MCF 10A (cell line): ENCODE measurements at regions of chr17 and their contacts with region 1.

Region 1: GRCh38 chr17:36534840-36535668 is at the starts of genes MYO19 and PIGW:
- DNase-seq: peak; percentile 93
- H3K4me3 Mint-ChIP-seq: peak within 1 kb of the TSS; percentile 96
- H3K27ac Mint-ChIP-seq: peak within 1 kb of the TSS; percentile 99
- H3K4me1 Mint-ChIP-seq: peaks cover 7% of the 10 kb centered on the region
- H3K27me3 Mint-ChIP-seq: no peaks in the 10 kb centered on the region
- CTCF ChIP-seq: no peak
- total RNA-seq, gene MYO19: 64.7 and 72.2 TPM in 2 replicates
- total RNA-seq, gene PIGW: 7.5 and 9.8 TPM in 2 replicates

Region 2: GRCh38 chr17:36486204-36487194 is 48.6 kb before region 1 on chr17 and contains the start of gene ZNHIT3:
- CTCF ChIA-PET with region 1: interaction called, 3 read pairs
- POLR2A ChIA-PET with region 1: interaction called, 11 read pairs
- intact Hi-C with region 1: no loop called
- DNase-seq: peak; percentile 94
- H3K4me3 Mint-ChIP-seq: peak within 1 kb of the TSS; percentile 86
- H3K27ac Mint-ChIP-seq: peak within 1 kb of the TSS; percentile 92
- H3K4me1 Mint-ChIP-seq: peaks cover 6% of the 10 kb centered on the region
- H3K27me3 Mint-ChIP-seq: peaks cover 10% of the 10 kb centered on the region
- CTCF ChIP-seq: no peak
- total RNA-seq, gene ZNHIT3: 33.9 and 35.5 TPM in 2 replicates

Region 3: DNA sequence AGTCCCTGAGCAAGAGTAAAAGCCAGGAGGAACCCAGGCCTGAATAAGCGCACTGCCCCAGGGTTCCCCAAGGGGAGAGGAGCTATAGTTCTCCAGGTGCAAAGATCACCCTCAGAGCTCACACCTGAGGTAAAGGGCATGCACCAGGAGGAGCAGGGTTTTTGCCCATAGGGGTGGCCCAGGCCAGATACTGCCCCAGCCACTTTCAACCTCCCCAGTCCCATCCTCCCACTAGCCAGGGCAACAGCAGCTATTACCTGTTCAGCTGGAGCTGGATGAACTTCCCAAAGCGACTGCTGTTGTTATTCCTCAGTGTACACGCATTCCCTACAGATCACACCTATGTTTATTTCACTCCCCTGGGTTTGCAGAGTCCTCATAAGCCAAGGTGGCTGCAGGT is 20.2 kb before region 1 on chr17:
- CTCF ChIA-PET with region 1: interaction called, 3 read pairs
- POLR2A ChIA-PET with region 1: interaction called, 11 read pairs
- intact Hi-C with region 1: no loop called
- DNase-seq: no peak
- H3K4me3 Mint-ChIP-seq: no peak overlapping the region
- H3K27ac Mint-ChIP-seq: peak overlapping the region; percentile 35
- H3K4me1 Mint-ChIP-seq: no peaks in the 10 kb centered on the region
- H3K27me3 Mint-ChIP-seq: no peaks in the 10 kb centered on the region
- CTCF ChIP-seq: no peak

Region 4: DNA sequence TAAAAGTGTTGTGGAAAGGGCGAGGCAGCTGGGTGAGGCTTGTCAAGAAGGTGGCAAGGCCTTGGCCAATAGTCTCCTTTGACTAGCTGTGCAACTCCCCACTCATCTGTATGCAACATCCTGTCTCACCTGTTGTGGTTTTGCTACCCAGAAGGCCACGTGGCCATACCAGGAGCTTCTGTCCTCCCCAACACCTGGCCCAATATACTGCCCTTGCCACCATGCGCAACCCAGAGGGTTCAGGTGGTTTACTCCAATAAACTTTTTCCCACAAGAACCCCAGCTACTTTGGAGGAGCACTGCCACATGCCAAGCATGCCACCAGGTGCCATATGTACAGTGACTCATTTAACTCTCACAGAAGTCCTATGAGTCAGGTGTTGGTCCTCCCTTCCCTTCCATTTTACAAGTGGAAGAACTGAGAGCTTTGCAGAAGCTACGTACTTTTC is 10.6 kb before region 1 on chr17:
- CTCF ChIA-PET with region 1: interaction called, 6 read pairs
- POLR2A ChIA-PET with region 1: interaction called, 10 read pairs
- intact Hi-C with region 1: no loop called
- DNase-seq: no peak
- H3K4me3 Mint-ChIP-seq: no peak overlapping the region
- H3K27ac Mint-ChIP-seq: no peak overlapping the region
- H3K4me1 Mint-ChIP-seq: peaks cover 11% of the 10 kb centered on the region
- H3K27me3 Mint-ChIP-seq: no peaks in the 10 kb centered on the region
- CTCF ChIP-seq: no peak

Region 5: GRCh38 chr17:36545465-36546417 is 10.7 kb after region 1 on chr17:
- CTCF ChIA-PET with region 1: interaction called, 5 read pairs
- POLR2A ChIA-PET with region 1: interaction called, 266 read pairs
- intact Hi-C with region 1: loop called (anchors 1 kb)
- DNase-seq: peak; percentile 96
- H3K4me3 Mint-ChIP-seq: peak overlapping the region; percentile 96
- H3K27ac Mint-ChIP-seq: peak overlapping the region; percentile 95
- H3K4me1 Mint-ChIP-seq: peaks cover 19% of the 10 kb centered on the region
- H3K27me3 Mint-ChIP-seq: no peaks in the 10 kb centered on the region
- CTCF ChIP-seq: no peak

Region 6: GRCh38 chr17:36550491-36551417 is 15.7 kb after region 1 on chr17:
- CTCF ChIA-PET with region 1: interaction called, 5 read pairs
- POLR2A ChIA-PET with region 1: interaction called, 266 read pairs
- intact Hi-C with region 1: no loop called
- DNase-seq: no peak
- H3K4me3 Mint-ChIP-seq: no peak overlapping the region
- H3K27ac Mint-ChIP-seq: no peak overlapping the region
- H3K4me1 Mint-ChIP-seq: peaks cover 28% of the 10 kb centered on the region
- H3K27me3 Mint-ChIP-seq: no peaks in the 10 kb centered on the region
- CTCF ChIP-seq: no peak

Region 7: GRCh38 chr17:36611345-36612072 is 76.5 kb after region 1 on chr17:
- CTCF ChIA-PET with region 1: no interaction called
- POLR2A ChIA-PET with region 1: no interaction called
- intact Hi-C with region 1: no loop called
- DNase-seq: peak; percentile 79
- H3K4me3 Mint-ChIP-seq: no peak overlapping the region
- H3K27ac Mint-ChIP-seq: no peak overlapping the region
- H3K4me1 Mint-ChIP-seq: peaks cover 13% of the 10 kb centered on the region
- H3K27me3 Mint-ChIP-seq: no peaks in the 10 kb centered on the region
- CTCF ChIP-seq: no peak